Activated CD4-positive, alpha-beta T cell treated with anti-CD3 and anti-CD28 coated beads, Interleukin-2, amount 10 ng/mL, durations not matched to agents 7 days and 5 days (primary cell): ENCODE measurements at regions of chr3 and their contacts with region 1.

Region 1: DNA sequence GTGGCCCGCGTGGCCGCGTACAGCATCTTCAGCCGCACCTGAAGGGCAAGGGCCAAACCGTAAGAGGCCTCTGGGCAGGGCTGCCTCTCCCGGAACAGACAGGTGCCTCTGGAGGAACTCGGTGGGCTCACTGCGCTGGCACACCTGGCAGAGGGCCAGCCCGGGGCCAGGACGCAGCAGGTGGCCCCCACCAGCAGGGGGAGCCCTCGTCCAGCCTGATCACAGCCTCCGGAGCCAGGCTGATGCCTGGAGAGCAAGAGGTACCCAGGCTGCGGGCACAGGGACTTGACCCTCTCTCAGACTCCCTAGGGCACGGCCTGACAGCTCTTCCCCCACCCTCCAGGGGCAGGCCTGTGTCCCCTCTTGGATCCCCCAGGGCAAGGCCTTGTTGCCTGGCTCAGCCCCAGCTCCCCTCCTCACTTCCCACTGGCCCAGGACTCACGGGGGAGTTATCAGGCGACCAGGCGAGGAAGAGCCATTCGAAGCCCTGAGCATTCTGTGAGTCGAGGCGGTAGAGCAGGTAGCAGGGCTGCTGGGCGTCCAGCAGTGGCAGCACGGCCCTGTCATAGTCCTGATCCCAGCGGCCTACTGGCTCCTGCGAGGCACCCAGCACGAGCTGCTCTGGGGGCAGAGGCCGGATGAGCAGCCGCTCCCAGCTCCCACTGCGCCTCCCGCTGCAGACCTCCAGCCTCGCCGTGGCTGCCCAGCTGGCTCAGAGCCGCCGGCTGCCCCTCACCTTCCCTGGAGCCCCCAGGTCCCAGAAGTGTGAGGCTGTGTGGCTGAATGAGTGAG is 6.3 kb upstream of the TLR9 start:
- DNase-seq: peak; percentile 78
- H3K4me3 Mint-ChIP-seq: peak overlapping the region; percentile 6
- H3K27ac Mint-ChIP-seq: peak overlapping the region; percentile 66
- H3K4me1 Mint-ChIP-seq: peaks cover 58% of the 10 kb centered on the region
- H3K27me3 Mint-ChIP-seq: no peaks in the 10 kb centered on the region

Region 2: GRCh38 chr3:52253314-52254304 is 21.9 kb after region 1 on chr3:
- CTCF ChIA-PET with region 1: interaction called, 17 read pairs
- POLR2A ChIA-PET with region 1: no interaction called
- DNase-seq: peak; percentile 91
- H3K4me3 Mint-ChIP-seq: peak overlapping the region; percentile 75
- H3K27ac Mint-ChIP-seq: peak overlapping the region; percentile 97
- H3K4me1 Mint-ChIP-seq: peaks cover 91% of the 10 kb centered on the region
- H3K27me3 Mint-ChIP-seq: no peaks in the 10 kb centered on the region

Region 3: GRCh38 chr3:52278510-52279069 is 46.9 kb after region 1 on chr3 and contains the start of gene WDR82:
- CTCF ChIA-PET with region 1: interaction called, 27 read pairs
- POLR2A ChIA-PET with region 1: no interaction called
- DNase-seq: peak; percentile 97
- H3K4me3 Mint-ChIP-seq: peak within 1 kb of the TSS; percentile 92
- H3K27ac Mint-ChIP-seq: peak within 1 kb of the TSS; percentile 99
- H3K4me1 Mint-ChIP-seq: peaks cover 63% of the 10 kb centered on the region
- H3K27me3 Mint-ChIP-seq: no peaks in the 10 kb centered on the region
- total RNA-seq, gene WDR82: 140 to 143 TPM

Region 4: DNA sequence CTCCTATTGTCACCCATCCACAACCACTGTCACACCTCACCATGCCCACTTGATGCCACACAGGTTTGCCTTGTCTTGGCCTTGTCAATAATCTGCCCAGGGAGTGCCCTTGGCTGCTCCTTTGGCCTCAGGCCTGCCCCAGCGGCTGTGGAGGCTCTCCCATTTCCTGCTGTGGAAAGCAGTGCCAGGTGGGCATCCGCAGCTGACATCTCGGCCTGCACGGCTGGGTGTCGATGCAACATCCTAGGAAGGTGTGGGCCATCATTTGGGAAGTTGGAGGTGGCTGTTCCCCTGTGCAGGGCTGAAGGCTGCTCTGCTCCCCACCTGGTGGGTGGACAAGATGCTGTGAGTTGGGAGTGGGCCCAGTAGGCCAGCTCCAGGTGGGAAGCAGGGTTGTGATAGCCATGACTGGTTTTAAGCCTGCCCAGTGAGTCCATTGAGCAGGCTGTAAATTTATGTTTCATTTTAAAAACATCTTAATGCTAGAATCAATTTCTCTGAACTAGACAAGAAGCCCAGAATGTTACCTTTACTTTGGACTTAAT is 96.9 kb after region 1 on chr3:
- CTCF ChIA-PET with region 1: interaction called, 11 read pairs
- POLR2A ChIA-PET with region 1: no interaction called
- DNase-seq: no peak
- H3K4me3 Mint-ChIP-seq: no peak overlapping the region
- H3K27ac Mint-ChIP-seq: no peak overlapping the region
- H3K4me1 Mint-ChIP-seq: no peaks in the 10 kb centered on the region
- H3K27me3 Mint-ChIP-seq: no peaks in the 10 kb centered on the region

Region 5: DNA sequence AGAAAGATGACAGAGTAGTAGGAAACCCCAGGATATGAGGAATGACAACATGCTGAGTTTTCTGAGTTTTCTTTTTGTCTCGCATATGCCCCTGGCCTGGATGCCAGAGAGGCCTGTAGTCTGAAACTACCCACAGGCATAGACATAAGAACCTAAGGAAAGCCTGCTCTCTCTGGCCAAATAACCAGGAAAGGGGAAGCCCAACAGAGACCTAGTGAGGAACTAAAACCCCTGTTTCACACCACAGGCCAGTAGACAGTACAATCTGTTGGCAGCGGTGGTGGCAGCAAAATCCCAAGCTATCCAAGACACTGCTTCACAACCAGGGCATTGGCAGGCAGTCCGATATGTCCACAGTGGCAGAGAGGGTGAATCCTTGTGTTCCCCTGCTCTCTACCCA is 1170.6 kb after region 1 on chr3:
- CTCF ChIA-PET with region 1: no interaction called
- POLR2A ChIA-PET with region 1: no interaction called
- DNase-seq: no peak
- H3K4me3 Mint-ChIP-seq: no peak overlapping the region
- H3K27ac Mint-ChIP-seq: no peak overlapping the region
- H3K4me1 Mint-ChIP-seq: peaks cover 3% of the 10 kb centered on the region
- H3K27me3 Mint-ChIP-seq: peaks cover 31% of the 10 kb centered on the region